HEK293 (cell line): ENCODE measurements at regions of chr17 and their contacts with region 1.

Region 1: DNA sequence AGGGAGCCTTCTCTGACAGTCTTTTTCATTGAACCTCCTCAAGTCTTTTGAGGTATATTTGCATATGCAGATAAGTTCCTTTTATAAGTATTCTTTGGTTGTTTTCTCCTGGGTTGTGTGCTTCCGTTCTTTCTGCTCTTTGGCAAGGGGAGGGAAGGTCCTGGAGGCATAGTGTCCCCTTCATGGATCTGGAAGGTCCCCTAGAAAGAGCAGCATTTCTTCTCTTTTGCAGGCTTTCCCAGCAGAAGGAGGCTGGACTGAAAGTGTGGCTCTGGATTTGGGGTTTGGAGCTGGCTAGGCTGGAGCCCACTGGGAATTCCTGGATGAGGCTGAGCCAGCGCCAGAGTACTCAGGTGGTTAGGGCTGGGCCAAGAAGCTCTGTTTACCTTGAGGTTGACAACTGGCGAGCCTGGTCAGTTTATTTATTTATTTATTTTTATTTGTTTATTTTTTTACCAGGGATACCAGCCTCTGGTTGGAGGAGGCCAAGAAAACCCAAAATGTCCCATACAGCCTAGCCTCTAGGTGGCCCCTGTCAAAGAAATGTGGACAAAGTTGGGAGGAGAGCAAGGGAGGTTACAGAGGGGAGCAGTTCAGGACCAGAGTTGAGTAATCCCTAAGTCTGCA is 5.4 kb upstream of the TOP2A start:
- H3K4me3 ChIP-seq: no peak overlapping the region
- H3K27ac ChIP-seq: no peak overlapping the region
- H3K4me1 ChIP-seq: peaks cover 8% of the 10 kb centered on the region
- CTCF ChIP-seq: peak; percentile 49

Region 2: GRCh38 chr17:40450175-40450574 is 27.1 kb after region 1 on chr17:
- CTCF ChIA-PET with region 1: interaction called, 17 read pairs
- POLR2A ChIA-PET with region 1: interaction called, 10 read pairs
- H3K4me3 ChIP-seq: no peak overlapping the region
- H3K27ac ChIP-seq: no peak overlapping the region
- H3K4me1 ChIP-seq: no peaks in the 10 kb centered on the region
- CTCF ChIP-seq: peak; percentile 60